Cardiac septum (tissue), 1 donor: ENCODE measurements at regions of chr7 and their contacts with region 1.

Region 1: DNA sequence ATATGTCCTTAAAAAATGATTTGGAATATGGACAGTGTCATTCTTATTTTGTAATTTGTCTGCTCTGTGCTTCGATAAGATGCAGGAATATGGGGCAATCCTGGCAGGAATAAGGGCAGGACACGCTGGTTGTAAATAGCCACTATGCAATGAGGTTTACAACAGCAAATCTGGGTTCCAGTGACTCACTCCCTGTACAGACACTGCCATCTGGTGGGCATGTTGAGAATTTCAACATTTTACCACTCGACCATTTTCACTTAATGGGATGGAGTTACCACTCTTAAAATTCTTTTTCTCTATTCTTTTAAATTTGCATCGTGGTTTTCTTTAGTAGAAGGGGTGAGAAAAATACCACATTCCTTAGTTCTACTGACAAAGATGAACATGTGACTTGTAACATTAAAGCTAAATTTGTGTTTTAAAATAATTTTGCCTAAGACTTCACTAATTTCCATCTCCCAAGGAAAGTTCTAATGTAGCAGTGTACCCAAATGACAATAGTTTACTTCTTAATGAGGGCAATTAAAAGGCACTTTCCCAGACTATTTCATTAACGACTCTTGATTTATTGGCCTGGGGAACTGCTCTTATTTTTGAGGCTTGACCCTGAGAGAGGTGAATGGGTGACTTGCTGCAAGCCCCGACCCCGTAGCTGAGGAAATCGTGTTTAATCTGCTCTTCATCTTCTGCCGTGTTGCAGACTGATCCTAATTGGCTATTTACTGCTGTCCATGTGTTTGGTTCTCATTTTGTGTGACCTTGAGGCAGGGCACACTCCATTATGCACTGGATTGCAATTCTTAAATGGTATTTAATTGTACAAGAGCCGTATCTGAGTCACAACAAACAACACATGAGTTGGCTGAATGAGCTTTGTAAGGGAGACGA is 173.6 kb upstream of the IMMP2L start:
- DNase-seq: no peak

Region 2: DNA sequence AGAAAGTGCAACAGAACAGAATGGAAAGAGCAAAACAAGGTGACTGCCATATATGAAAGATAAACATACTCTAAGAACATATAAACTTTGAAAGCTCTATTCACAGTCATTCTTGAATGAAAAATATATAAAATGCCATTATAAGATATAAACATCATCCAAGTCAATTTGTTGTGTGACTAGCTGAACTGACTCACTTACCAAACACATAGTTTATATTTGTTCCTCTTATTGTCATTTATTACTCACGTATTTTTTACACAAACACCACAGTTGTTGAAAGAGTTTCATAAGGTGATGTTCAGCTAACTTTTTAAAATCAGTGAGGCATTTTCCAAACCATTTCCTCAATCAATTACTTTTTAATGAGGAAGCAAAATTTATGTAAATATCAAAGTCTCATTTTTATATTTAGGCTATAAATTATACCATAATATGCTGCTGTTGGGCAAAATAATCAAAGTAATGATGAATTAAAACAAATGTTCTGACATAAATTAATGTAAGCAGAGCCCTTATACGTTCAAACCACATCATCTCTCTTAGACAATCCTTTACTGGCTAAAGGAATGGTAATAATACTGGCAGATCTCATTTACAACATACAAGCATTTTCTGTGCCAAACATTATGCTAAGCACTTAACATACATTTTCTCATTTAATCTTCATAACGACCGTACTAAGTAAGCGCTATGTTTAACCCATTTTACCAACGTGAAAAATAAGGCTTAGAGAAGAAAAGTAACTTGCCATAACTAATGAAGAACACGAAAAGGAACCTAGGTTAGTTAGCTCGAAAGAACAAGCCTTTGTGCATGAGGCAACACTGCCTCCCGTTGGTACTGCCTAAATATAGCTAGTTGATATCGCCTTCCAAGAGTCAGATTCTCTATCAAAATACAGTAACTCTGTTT is 637.6 kb before region 1 on chr7:
- intact Hi-C with region 1: loop called (anchors 10 kb)
- DNase-seq: no peak